B cell (primary cell): ENCODE measurements at regions of chr2 and their contacts with region 1.

Region 1: GRCh38 chr2:200525882-200526651 is at the start of gene SGO2:
- DNase-seq: peak; percentile 95
- ATAC-seq: peak; percentile 100
- H3K4me3 ChIP-seq: peak within 1 kb of the TSS; percentile 75 to 93 (median 87)
- H3K4me3 Mint-ChIP-seq: peak within 1 kb of the TSS; percentile 93
- H3K27ac ChIP-seq: peak within 1 kb of the TSS in 1 of 2 donors; percentile 57
- H3K27ac Mint-ChIP-seq: peak within 1 kb of the TSS; percentile 83
- H3K4me1 ChIP-seq: peaks cover 7 to 9% of the 10 kb centered on the region in 2 donors
- H3K4me1 Mint-ChIP-seq: peaks cover 12% of the 10 kb centered on the region
- H3K27me3 ChIP-seq: peaks cover 0 to 6% (median 0%) of the 10 kb centered on the region in 4 experiments
- H3K27me3 Mint-ChIP-seq: peaks cover 8% of the 10 kb centered on the region
- CTCF ChIP-seq: no peak
- total RNA-seq, gene SGO2: 4.0 and 5.3 TPM in 2 replicates

Region 2: DNA sequence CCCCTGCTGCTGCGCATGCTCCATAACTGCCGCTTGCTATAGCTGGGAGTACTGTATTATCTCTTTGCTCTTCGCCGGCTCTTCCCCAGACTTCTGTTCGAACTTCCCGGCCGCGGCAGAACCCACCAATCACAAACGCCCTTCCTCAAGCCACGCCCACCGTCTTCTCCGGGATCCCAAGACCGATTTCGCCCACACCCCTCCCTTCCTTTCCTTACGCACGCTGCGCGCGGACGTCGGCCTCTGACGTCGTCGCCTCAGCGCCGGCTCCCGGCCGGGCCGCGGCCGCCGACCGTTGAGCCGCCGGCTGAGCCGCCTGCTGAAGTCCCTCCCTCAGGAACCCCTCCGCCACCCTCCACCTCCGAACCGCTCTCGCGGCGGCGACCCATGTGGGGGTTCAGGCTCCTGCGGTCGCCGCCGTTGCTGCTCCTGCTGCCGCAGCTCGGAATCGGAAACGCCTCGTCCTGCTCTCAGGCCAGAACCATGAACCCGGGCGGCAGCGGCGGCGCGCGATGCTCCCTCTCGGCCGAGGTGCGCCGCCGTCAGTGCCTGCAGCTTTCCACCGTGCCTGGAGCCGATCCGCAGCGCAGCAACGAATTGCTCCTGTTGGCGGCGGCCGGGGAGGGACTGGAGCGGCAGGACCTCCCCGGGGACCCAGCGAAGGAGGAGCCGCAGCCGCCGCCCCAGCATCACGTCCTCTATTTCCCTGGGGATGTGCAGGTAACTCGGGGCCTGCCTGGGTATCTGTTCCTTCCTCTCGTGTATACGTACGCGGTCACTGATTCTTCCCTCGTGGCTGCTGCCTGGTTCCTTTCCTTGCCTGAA is 614.8 kb before region 1 on chr2 and contains the start of gene C2orf69:
- CTCF ChIA-PET with region 1: no interaction called
- POLR2A ChIA-PET with region 1: no interaction called
- intact Hi-C with region 1: loop called (anchors 1 kb)
- DNase-seq: peak; percentile 96
- ATAC-seq: peak; percentile 86
- H3K4me3 ChIP-seq: peak within 1 kb of the TSS; percentile 71 to 98 (median 87)
- H3K4me3 Mint-ChIP-seq: peak within 1 kb of the TSS; percentile 89
- H3K27ac ChIP-seq: peak within 1 kb of the TSS; percentile 97 to 98
- H3K27ac Mint-ChIP-seq: peak within 1 kb of the TSS; percentile 87
- H3K4me1 ChIP-seq: peaks cover 12 to 26% of the 10 kb centered on the region in 2 donors
- H3K4me1 Mint-ChIP-seq: peaks cover 43% of the 10 kb centered on the region
- H3K27me3 ChIP-seq: no peaks in the 10 kb centered on the region
- H3K27me3 Mint-ChIP-seq: no peaks in the 10 kb centered on the region
- CTCF ChIP-seq: no peak
- total RNA-seq, gene C2orf69: 12.8 and 12.9 TPM in 2 replicates

Region 3: DNA sequence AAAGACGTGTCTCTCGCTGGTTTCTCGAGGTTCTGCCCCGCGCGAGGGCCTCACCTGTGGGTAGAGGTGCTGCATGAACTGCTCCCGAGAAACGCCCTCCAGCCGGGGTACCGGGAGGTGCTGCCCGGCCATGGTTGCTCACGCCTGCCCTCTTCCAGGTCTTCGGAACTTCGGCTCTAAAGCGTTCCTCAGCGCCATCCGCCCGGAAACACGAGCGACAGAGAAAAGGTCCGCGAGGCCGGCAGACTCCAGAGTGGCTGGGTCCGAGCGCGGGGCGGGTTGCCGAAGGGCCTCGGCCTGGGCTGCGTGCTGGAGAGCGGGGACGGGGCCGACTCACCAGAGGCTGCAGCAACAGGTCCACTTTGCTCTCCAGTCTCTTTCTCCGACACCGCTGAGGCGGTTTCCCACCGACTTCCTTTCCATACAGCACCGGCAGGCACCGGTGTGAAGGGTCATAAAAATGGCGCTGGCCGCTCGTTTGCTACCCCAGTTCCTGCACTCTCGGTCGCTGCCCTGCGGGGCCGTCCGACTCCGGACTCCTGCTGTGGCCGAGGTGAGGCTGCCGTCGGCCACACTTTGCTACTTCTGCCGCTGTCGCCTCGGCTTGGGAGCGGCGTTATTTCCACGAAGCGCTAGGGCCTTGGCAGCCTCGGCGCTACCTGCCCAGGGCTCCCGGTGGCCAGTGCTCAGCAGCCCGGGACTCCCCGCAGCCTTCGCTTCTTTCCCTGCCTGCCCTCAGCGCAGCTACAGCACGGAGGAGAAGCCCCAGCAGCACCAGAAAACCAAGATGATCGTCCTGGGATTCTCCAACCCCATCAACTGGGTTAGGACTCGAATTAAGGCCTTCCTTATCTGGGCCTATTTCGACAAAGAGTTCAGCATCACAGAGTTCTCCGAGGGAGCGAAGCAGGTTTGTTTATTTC is 570.5 kb before region 1 on chr2 and contains the starts of genes MAIP1 and TYW5:
- CTCF ChIA-PET with region 1: no interaction called
- POLR2A ChIA-PET with region 1: no interaction called
- intact Hi-C with region 1: loop called (anchors 1 kb)
- DNase-seq: peak; percentile 88
- ATAC-seq: peak; percentile 87
- H3K4me3 ChIP-seq: peak within 1 kb of the TSS; percentile 70 to 97 (median 75)
- H3K4me3 Mint-ChIP-seq: peak within 1 kb of the TSS; percentile 98
- H3K27ac ChIP-seq: peak within 1 kb of the TSS; percentile 59 to 85
- H3K27ac Mint-ChIP-seq: peak within 1 kb of the TSS; percentile 93
- H3K4me1 ChIP-seq: peaks cover 24 to 27% of the 10 kb centered on the region in 2 donors
- H3K4me1 Mint-ChIP-seq: peaks cover 52% of the 10 kb centered on the region
- H3K27me3 ChIP-seq: no peaks in the 10 kb centered on the region
- H3K27me3 Mint-ChIP-seq: no peaks in the 10 kb centered on the region
- CTCF ChIP-seq: no peak
- total RNA-seq, gene MAIP1: 15.7 and 15.8 TPM in 2 replicates
- total RNA-seq, gene TYW5: 15.0 and 15.4 TPM in 2 replicates

Region 4: GRCh38 chr2:200411831-200412230 is 114.2 kb before region 1 on chr2:
- CTCF ChIA-PET with region 1: no interaction called
- POLR2A ChIA-PET with region 1: no interaction called
- intact Hi-C with region 1: no loop called
- DNase-seq: no peak
- ATAC-seq: no peak
- H3K4me3 ChIP-seq: no peak overlapping the region
- H3K4me3 Mint-ChIP-seq: no peak overlapping the region
- H3K27ac ChIP-seq: no peak overlapping the region
- H3K27ac Mint-ChIP-seq: no peak overlapping the region
- H3K4me1 ChIP-seq: no peaks in the 10 kb centered on the region
- H3K4me1 Mint-ChIP-seq: no peaks in the 10 kb centered on the region
- H3K27me3 ChIP-seq: no peaks in the 10 kb centered on the region
- H3K27me3 Mint-ChIP-seq: peaks cover 19% of the 10 kb centered on the region
- CTCF ChIP-seq: no peak

Region 5: DNA sequence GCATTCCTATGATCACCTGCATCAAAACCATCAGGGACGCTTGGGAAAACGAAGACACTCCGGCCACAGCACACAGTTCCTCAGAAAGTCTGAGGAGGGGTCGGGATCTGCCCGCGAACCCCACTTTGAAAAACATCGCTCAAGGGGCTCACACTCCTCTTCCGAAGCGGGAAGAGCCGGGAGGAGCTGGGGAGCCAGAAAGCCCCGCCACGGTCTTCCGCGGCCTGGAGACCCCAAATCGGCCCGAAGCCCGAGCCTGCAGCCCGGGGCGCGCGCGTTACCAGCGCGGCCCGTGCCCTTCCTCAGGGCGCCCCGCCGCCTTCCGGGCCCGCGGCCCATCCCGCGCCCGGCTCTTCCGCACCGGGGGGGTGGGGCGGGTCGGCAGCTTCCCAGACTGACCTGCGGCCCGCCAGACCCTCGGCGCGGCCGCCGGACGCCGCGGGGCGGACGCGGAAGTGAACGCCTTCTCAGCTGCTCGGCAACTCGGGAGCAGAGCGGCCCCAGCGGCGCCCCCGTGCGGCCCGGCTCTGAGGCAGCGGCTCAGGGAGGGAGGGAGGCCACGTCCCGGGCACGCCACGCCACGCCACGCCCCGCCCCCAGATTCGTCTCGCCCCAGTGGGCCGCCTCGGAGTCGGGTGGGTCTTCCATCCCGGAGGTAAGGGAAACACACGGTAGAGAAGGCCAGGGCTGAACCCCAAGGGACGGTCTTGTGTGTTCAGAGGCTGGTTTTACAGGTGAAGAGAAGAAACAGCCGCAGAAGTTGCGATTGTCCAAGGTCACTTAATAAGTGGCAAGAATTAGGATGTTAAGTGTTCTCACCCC is 16.2 kb before region 1 on chr2 and contains the start of gene KCTD18:
- CTCF ChIA-PET with region 1: interaction called, 6 read pairs
- POLR2A ChIA-PET with region 1: interaction called, 12 read pairs
- intact Hi-C with region 1: loop called (anchors 1 kb)
- DNase-seq: peak; percentile 91
- ATAC-seq: peak; percentile 100
- H3K4me3 ChIP-seq: peak within 1 kb of the TSS; percentile 64 to 81 (median 66)
- H3K4me3 Mint-ChIP-seq: peak within 1 kb of the TSS; percentile 95
- H3K27ac ChIP-seq: peak within 1 kb of the TSS; percentile 49 to 79
- H3K27ac Mint-ChIP-seq: peak within 1 kb of the TSS; percentile 92
- H3K4me1 ChIP-seq: peaks cover 15 to 21% of the 10 kb centered on the region in 2 donors
- H3K4me1 Mint-ChIP-seq: peaks cover 28% of the 10 kb centered on the region
- H3K27me3 ChIP-seq: peaks cover 0 to 13% (median 13%) of the 10 kb centered on the region in 4 experiments
- H3K27me3 Mint-ChIP-seq: peaks cover 4% of the 10 kb centered on the region
- CTCF ChIP-seq: peak; percentile 83
- total RNA-seq, gene KCTD18: 20.2 and 21.3 TPM in 2 replicates

Region 6: DNA sequence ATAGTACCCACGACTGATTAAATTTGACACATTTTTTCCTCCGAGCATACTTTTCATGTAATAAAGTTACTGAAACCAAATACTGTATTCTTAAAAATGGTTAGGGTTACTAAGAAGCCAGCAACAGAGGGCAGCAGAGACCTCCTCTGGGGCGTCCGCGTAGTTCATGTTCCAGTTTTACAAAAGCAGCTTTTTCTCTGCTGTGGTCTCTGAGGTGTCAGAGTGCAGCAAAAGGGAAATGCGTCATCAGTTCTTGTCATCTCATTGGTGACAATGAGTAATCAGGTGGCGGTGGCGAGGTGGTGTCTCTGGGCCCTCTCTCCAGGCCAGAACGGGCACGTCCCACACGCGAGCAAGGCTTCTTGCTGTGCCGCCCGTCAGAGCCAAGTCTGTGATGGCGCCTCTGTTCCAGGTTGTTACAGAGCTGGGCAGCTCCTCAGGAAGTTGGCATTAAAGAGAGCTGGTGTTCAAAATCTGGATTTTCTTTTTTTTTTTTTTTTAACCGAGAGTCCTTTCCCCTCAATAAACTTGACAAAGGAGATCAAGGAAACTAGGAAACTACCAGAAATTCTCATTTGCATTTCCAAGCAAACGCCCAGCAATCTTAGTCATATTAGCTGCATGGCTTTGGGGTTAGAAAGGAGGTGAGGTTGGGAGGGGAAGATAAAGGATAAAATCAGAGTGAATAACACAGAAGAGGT is 187.1 kb after region 1 on chr2:
- CTCF ChIA-PET with region 1: interaction called, 4 read pairs
- POLR2A ChIA-PET with region 1: no interaction called
- intact Hi-C with region 1: loop called (anchors 5 kb)
- DNase-seq: peak; percentile 91
- ATAC-seq: peak; percentile 99
- H3K4me3 ChIP-seq: peak overlapping the region in 4 of 5 experiments; percentile 5 to 52 (median 16)
- H3K4me3 Mint-ChIP-seq: peak overlapping the region; percentile 83
- H3K27ac ChIP-seq: peak overlapping the region; percentile 82 to 93
- H3K27ac Mint-ChIP-seq: peak overlapping the region; percentile 98
- H3K4me1 ChIP-seq: peaks cover 5 to 6% of the 10 kb centered on the region in 2 donors
- H3K4me1 Mint-ChIP-seq: peaks cover 15% of the 10 kb centered on the region
- H3K27me3 ChIP-seq: no peaks in the 10 kb centered on the region
- H3K27me3 Mint-ChIP-seq: peaks cover 10% of the 10 kb centered on the region
- CTCF ChIP-seq: peak; percentile 83

Region 7: GRCh38 chr2:200864176-200864976 is 338.3 kb after region 1 on chr2 and contains the start of gene CLK1:
- CTCF ChIA-PET with region 1: no interaction called
- POLR2A ChIA-PET with region 1: no interaction called
- intact Hi-C with region 1: loop called (anchors 10 kb)
- DNase-seq: peak; percentile 97
- ATAC-seq: peak; percentile 85
- H3K4me3 ChIP-seq: peak within 1 kb of the TSS; percentile 85 to 100 (median 97)
- H3K4me3 Mint-ChIP-seq: peak within 1 kb of the TSS; percentile 93
- H3K27ac ChIP-seq: peak within 1 kb of the TSS; percentile 98 to 99
- H3K27ac Mint-ChIP-seq: peak within 1 kb of the TSS; percentile 100
- H3K4me1 ChIP-seq: peaks cover 27 to 31% of the 10 kb centered on the region in 2 donors
- H3K4me1 Mint-ChIP-seq: peaks cover 41% of the 10 kb centered on the region
- H3K27me3 ChIP-seq: no peaks in the 10 kb centered on the region
- H3K27me3 Mint-ChIP-seq: no peaks in the 10 kb centered on the region
- CTCF ChIP-seq: no peak
- total RNA-seq, gene CLK1: 396 and 409 TPM in 2 replicates

Region 8: GRCh38 chr2:200959301-200959700 is 433.2 kb after region 1 on chr2:
- CTCF ChIA-PET with region 1: no interaction called
- POLR2A ChIA-PET with region 1: no interaction called
- intact Hi-C with region 1: no loop called
- DNase-seq: no peak
- ATAC-seq: no peak
- H3K4me3 ChIP-seq: no peak overlapping the region
- H3K4me3 Mint-ChIP-seq: no peak overlapping the region
- H3K27ac ChIP-seq: no peak overlapping the region
- H3K27ac Mint-ChIP-seq: no peak overlapping the region
- H3K4me1 ChIP-seq: peaks cover 21% of the 10 kb centered on the region in 2 donors
- H3K4me1 Mint-ChIP-seq: peaks cover 38% of the 10 kb centered on the region
- H3K27me3 ChIP-seq: no peaks in the 10 kb centered on the region
- H3K27me3 Mint-ChIP-seq: no peaks in the 10 kb centered on the region
- CTCF ChIP-seq: no peak